ENCODE measurements at regions of chr17 and their contacts with region 1.

Region 1: GRCh38 chr17:58284320-58285067 is 3.8 kb upstream of the MPO start:
- DNase-seq: no peak
- ATAC-seq: no peak
- H3K4me3 ChIP-seq: no peak overlapping the region
- H3K4me3 Mint-ChIP-seq: no peak overlapping the region
- H3K27ac ChIP-seq: no peak overlapping the region
- H3K27ac Mint-ChIP-seq: no peak overlapping the region
- H3K4me1 ChIP-seq: peaks cover 0 to 2% of the 10 kb centered on the region in 2 donors
- H3K4me1 Mint-ChIP-seq: no peaks in the 10 kb centered on the region
- H3K27me3 ChIP-seq: peaks cover 0 to 18% (median 1%) of the 10 kb centered on the region in 4 experiments
- H3K27me3 Mint-ChIP-seq: peaks cover 32% of the 10 kb centered on the region
- CTCF ChIP-seq: no peak

Region 2: GRCh38 chr17:58556833-58557250 is 272.3 kb after region 1 on chr17:
- CTCF ChIA-PET with region 1: no interaction called
- POLR2A ChIA-PET with region 1: interaction called, 11 read pairs
- intact Hi-C with region 1: no loop called
- DNase-seq: peak; percentile 45
- ATAC-seq: peak; percentile 21
- H3K4me3 ChIP-seq: peak overlapping the region in 2 of 5 experiments; percentile 27 to 44
- H3K4me3 Mint-ChIP-seq: peak overlapping the region; percentile 75
- H3K27ac ChIP-seq: peak overlapping the region; percentile 9 to 54
- H3K27ac Mint-ChIP-seq: peak overlapping the region; percentile 67
- H3K4me1 ChIP-seq: peaks cover 14 to 26% of the 10 kb centered on the region in 2 donors
- H3K4me1 Mint-ChIP-seq: peaks cover 31% of the 10 kb centered on the region
- H3K27me3 ChIP-seq: no peaks in the 10 kb centered on the region
- H3K27me3 Mint-ChIP-seq: no peaks in the 10 kb centered on the region
- CTCF ChIP-seq: no peak